ENCODE measurements at regions of chr17 and their contacts with region 1.

Region 1: DNA sequence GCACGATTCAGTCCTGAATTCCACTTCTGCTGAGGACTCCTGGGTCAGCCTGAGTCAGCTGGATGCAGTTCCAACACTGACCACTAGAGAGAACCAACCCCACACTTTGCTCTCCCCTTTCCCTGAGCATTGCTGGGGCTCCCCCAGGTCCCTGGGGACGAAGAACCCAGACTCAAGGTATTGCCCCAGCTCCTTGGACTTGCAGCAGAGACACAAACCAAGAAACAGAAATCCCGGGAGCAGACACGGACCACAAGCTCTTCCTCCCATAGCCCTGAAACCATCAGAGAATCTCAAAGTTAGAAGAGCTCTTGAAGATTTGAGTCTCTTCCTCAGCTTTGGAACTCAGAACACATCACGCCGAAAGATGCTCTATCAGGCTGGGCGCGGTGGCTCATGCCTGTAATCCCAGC is 678 bp upstream of the GH1 start:
- DNase-seq: peak; percentile 68
- H3K4me3 ChIP-seq: no peak overlapping the region
- H3K27ac ChIP-seq: no peak overlapping the region
- H3K4me1 ChIP-seq: no peaks in the 10 kb centered on the region
- H3K27me3 ChIP-seq: peaks cover 0 to 3% of the 10 kb centered on the region in 2 experiments
- CTCF ChIP-seq: peak; percentile 75 to 89
- POLR2A ChIP-seq: no peak

Region 2: GRCh38 chr17:63904316-63904715 is 15.0 kb before region 1 on chr17:
- CTCF ChIA-PET with region 1: interaction called, 19 read pairs
- POLR2A ChIA-PET with region 1: no interaction called
- dilution Hi-C with region 1: no loop called
- intact Hi-C with region 1: no loop called
- DNase-seq: no peak
- H3K4me3 ChIP-seq: no peak overlapping the region
- H3K27ac ChIP-seq: no peak overlapping the region
- H3K4me1 ChIP-seq: no peaks in the 10 kb centered on the region
- H3K27me3 ChIP-seq: peaks cover 5 to 8% of the 10 kb centered on the region in 2 experiments
- CTCF ChIP-seq: no peak
- POLR2A ChIP-seq: no peak

Region 3: GRCh38 chr17:63931099-63931561 is 11.8 kb after region 1 on chr17:
- CTCF ChIA-PET with region 1: interaction called, 23 read pairs
- POLR2A ChIA-PET with region 1: no interaction called
- dilution Hi-C with region 1: no loop called
- intact Hi-C with region 1: no loop called
- DNase-seq: no peak
- H3K4me3 ChIP-seq: no peak overlapping the region
- H3K27ac ChIP-seq: no peak overlapping the region
- H3K4me1 ChIP-seq: peaks cover 4% of the 10 kb centered on the region
- H3K27me3 ChIP-seq: no peaks in the 10 kb centered on the region
- CTCF ChIP-seq: no peak
- POLR2A ChIP-seq: no peak

Region 4: GRCh38 chr17:63984651-63985386 is 65.5 kb after region 1 on chr17:
- CTCF ChIA-PET with region 1: interaction called, 183 read pairs
- POLR2A ChIA-PET with region 1: no interaction called
- dilution Hi-C with region 1: no loop called
- intact Hi-C with region 1: loop called (anchors 1 kb)
- DNase-seq: peak; percentile 93
- H3K4me3 ChIP-seq: no peak overlapping the region
- H3K27ac ChIP-seq: no peak overlapping the region
- H3K4me1 ChIP-seq: peaks cover 21% of the 10 kb centered on the region
- H3K27me3 ChIP-seq: no peaks in the 10 kb centered on the region
- CTCF ChIP-seq: no peak
- POLR2A ChIP-seq: no peak

Region 5: DNA sequence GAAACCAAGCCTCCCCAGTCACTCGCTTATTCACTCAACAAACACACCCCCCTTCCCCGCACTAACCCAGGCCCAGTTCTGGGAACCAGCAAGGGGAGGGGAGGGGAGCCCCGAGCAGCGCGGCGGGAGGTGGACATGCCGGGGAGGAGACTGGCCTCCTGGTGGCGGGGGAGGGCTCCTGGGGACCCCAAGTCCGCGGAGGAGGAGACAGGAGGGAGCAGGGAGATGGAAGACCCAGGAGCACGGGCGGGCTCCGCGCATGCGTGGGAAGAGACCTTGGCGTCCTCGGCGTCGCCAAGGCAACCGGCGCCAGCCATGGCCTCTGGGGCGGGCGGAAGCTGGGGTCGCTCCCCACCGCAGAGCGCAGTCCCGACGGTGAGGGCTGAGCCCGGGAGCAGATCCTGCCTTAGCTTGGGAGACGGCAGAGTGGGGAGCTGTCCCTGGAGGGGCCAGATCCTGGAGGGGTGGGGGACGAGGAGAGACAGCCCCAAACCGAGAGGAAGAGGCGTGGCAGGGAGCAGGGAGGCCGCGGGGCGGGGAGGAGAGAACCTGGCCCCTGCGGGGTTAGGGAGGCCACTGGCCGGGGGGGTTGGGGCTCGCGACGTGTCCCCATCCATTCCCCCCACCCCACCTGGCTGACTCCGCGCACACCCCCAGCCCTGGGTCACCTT is 78.9 kb after region 1 on chr17 and contains the start of gene PRR29:
- CTCF ChIA-PET with region 1: interaction called, 183 read pairs
- POLR2A ChIA-PET with region 1: interaction called, 5 read pairs
- dilution Hi-C with region 1: no loop called
- intact Hi-C with region 1: no loop called
- DNase-seq: peak; percentile 71
- H3K4me3 ChIP-seq: peak within 1 kb of the TSS; percentile 12 to 59 (median 37)
- H3K27ac ChIP-seq: peak within 1 kb of the TSS; percentile 23
- H3K4me1 ChIP-seq: peaks cover 42% of the 10 kb centered on the region
- H3K27me3 ChIP-seq: no peaks in the 10 kb centered on the region
- CTCF ChIP-seq: no peak
- POLR2A ChIP-seq: no peak
- total RNA-seq, gene PRR29: 0.78 and 1.2 TPM in 2 replicates

Region 6: GRCh38 chr17:64005734-64006167 is 86.4 kb after region 1 on chr17:
- CTCF ChIA-PET with region 1: interaction called, 16 read pairs
- POLR2A ChIA-PET with region 1: interaction called, 5 read pairs
- dilution Hi-C with region 1: no loop called
- intact Hi-C with region 1: no loop called
- DNase-seq: peak; percentile 64
- H3K4me3 ChIP-seq: peak overlapping the region; percentile 66 to 87 (median 73)
- H3K27ac ChIP-seq: peak overlapping the region; percentile 91
- H3K4me1 ChIP-seq: peaks cover 85% of the 10 kb centered on the region
- H3K27me3 ChIP-seq: no peaks in the 10 kb centered on the region
- CTCF ChIP-seq: no peak
- POLR2A ChIP-seq: no peak

Region 7: GRCh38 chr17:64020056-64020766 is 100.9 kb after region 1 on chr17 and contains the start of gene ICAM2:
- CTCF ChIA-PET with region 1: interaction called, 159 read pairs
- POLR2A ChIA-PET with region 1: no interaction called
- dilution Hi-C with region 1: no loop called
- intact Hi-C with region 1: loop called (anchors 1 kb)
- DNase-seq: peak; percentile 71
- H3K4me3 ChIP-seq: peak within 1 kb of the TSS; percentile 49 to 63 (median 54)
- H3K27ac ChIP-seq: peak within 1 kb of the TSS; percentile 94
- H3K4me1 ChIP-seq: peaks cover 67% of the 10 kb centered on the region
- H3K27me3 ChIP-seq: no peaks in the 10 kb centered on the region
- CTCF ChIP-seq: no peak
- POLR2A ChIP-seq: peak; percentile 48
- total RNA-seq, gene ICAM2: 514 and 586 TPM in 2 replicates

Measured in endothelial cell of umbilical vein (primary cell).